ENCODE measurements at regions of chr15 and their contacts with region 1.

Region 1: DNA sequence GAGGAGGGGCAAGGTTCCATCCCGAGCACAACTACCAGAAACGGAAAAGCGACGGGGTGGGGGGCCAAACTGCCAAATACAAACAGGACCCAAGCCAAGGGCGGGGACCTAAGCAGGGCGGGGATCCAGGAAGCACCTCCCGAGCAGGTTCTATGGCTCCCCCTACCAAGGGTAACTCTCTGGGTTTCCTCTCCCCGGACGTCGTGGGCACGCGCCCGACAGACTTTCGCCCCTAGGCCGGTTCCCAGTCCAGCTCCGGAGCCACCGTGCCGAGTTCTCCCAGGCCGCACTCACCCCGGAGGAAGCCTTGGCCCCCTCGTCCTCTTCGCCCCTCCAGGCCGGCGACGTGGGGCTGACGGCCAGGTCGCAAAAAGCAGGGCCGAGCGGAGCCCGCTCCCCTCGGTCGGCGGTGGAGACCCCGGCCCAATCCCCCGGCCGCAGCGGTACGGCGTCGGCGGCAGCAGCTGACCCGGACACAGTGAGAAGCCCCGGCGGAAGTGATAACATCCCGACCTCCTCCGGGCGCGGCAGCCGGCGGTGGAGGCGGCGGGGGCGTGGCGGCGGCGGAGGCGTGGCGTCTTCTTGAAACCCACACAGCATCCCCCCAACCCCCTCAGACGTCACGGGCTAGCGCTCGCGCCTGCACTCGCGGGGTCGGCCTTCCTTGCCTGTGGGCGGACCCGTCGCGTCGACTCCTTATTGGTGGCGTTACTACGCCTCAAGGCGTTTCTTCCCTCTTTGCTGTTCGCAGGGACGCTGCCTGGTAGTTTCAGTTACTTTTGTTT is at the start of gene BNIP2:
- DNase-seq: peak; percentile 96 to 100 (median 100)
- ATAC-seq: peak; percentile 86
- H3K4me3 ChIP-seq: peak within 1 kb of the TSS; percentile 97
- H3K4me3 Mint-ChIP-seq: peak within 1 kb of the TSS; percentile 95
- H3K27ac ChIP-seq: peak within 1 kb of the TSS; percentile 99 to 100
- H3K27ac Mint-ChIP-seq: peak within 1 kb of the TSS; percentile 99
- H3K4me1 ChIP-seq: peaks cover 33% of the 10 kb centered on the region
- H3K4me1 Mint-ChIP-seq: peaks cover 43% of the 10 kb centered on the region
- H3K27me3 ChIP-seq: no peaks in the 10 kb centered on the region
- H3K27me3 Mint-ChIP-seq: no peaks in the 10 kb centered on the region
- CTCF ChIP-seq: no peak
- total RNA-seq, gene BNIP2: 109 TPM

Region 2: GRCh38 chr15:57706405-57707209 is 1982.4 kb before region 1 on chr15 and contains the start of gene POLR2M:
- CTCF ChIA-PET with region 1: no interaction called
- POLR2A ChIA-PET with region 1: interaction called, 8 read pairs
- intact Hi-C with region 1: loop called in 1 of 2 experiments (anchors 10 kb)
- DNase-seq: peak; percentile 78 to 98 (median 86)
- ATAC-seq: peak; percentile 88
- H3K4me3 ChIP-seq: peak within 1 kb of the TSS; percentile 90
- H3K4me3 Mint-ChIP-seq: peak within 1 kb of the TSS; percentile 85
- H3K27ac ChIP-seq: peak within 1 kb of the TSS; percentile 87 to 95
- H3K27ac Mint-ChIP-seq: peak within 1 kb of the TSS; percentile 99
- H3K4me1 ChIP-seq: peaks cover 35% of the 10 kb centered on the region
- H3K4me1 Mint-ChIP-seq: peaks cover 93% of the 10 kb centered on the region
- H3K27me3 ChIP-seq: no peaks in the 10 kb centered on the region
- H3K27me3 Mint-ChIP-seq: no peaks in the 10 kb centered on the region
- CTCF ChIP-seq: no peak
- total RNA-seq, gene POLR2M: 88.5 to 109 TPM

Region 3: DNA sequence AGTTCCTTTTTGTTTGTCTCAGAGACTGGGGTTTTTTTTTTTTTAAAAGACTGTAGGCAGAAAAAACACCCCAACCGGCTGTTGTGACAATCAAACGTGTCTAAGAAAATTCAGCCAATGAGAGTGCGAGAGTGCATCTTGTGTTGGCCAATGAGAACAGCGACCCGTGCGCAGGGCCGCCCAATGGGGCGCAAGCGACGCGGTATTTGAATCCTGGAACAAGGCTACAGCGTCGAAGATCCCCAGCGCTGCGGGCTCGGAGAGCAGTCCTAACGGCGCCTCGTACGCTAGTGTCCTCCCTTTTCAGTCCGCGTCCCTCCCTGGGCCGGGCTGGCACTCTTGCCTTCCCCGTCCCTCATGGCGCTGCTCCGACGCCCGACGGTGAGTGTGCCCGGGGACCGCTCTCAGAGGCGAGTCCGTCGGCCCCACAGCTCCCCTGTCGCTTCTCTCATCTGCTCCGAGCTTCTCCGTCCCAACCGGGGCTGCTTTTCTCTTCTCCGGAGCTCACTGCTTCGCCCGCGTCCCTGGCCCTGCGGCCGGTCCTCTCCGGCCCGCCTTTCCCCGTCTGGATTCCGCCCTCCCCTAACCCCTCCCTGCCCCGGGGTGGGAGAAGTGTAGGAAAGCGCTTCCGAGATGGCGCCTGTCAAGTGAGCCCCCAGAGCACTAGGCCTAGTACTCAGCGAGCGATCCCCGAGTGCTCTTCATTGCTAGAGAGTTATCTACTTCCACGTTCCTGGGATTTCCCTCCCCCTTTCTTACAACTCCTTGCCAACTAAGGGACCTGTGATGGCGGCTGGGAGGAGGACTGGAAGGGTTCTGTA is 583.9 kb before region 1 on chr15 and contains the start of gene CCNB2:
- CTCF ChIA-PET with region 1: no interaction called
- POLR2A ChIA-PET with region 1: no interaction called
- intact Hi-C with region 1: loop called in 1 of 2 experiments (anchors 10 kb)
- DNase-seq: peak; percentile 68 to 95 (median 79)
- ATAC-seq: peak; percentile 99
- H3K4me3 ChIP-seq: peak within 1 kb of the TSS; percentile 71
- H3K4me3 Mint-ChIP-seq: peak within 1 kb of the TSS; percentile 97
- H3K27ac ChIP-seq: peak within 1 kb of the TSS in 1 of 2 donors; percentile 26
- H3K27ac Mint-ChIP-seq: peak within 1 kb of the TSS; percentile 99
- H3K4me1 ChIP-seq: peaks cover 9% of the 10 kb centered on the region
- H3K4me1 Mint-ChIP-seq: peaks cover 17% of the 10 kb centered on the region
- H3K27me3 ChIP-seq: no peaks in the 10 kb centered on the region
- H3K27me3 Mint-ChIP-seq: no peaks in the 10 kb centered on the region
- CTCF ChIP-seq: no peak
- total RNA-seq, gene CCNB2: 0.85 TPM in 1 of 2 experiments, not detected in the other

Region 4: DNA sequence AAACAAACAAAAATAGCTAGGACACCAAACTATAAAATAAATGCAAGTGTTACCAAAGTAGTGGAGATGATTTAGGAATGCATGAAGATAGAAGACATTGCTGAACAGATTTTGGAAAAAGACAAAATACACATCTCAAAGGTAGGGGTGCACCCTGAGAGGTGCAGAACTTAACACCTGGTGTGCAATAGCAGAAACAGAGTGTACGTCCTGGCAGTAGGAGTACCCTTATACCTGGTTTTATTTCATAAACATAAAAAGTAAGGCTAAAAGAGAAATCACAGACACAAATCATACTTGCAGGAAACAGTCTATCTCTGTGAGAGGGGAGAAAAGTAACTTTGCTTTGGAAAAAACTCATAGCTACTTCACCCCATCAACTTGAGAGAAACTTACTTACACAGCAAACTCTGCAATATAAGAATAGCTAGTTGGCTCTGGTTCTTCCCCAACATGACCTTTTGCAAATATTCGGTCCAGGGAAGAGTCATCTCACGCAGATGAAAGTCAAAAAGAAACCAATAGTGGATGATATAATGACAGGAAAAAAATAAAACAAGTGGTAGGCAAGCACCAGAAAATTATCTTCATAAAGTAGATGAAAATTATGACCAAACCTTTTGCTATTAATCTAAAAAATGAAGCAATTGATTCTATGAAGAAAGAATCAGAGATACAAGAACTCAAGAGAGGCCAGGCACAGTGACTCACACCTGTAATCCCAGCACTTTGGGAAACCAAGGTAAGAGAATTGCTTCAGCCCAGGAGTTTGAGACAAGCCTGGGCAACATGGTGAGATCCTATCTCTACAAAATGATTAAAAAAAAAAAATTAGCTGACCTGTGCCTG is 108.9 kb after region 1 on chr15:
- CTCF ChIA-PET with region 1: no interaction called
- POLR2A ChIA-PET with region 1: interaction called, 9 read pairs
- intact Hi-C with region 1: loop called in 1 of 2 experiments (anchors 1 kb)
- DNase-seq: peak in 1 of 14 experiments; percentile 39
- ATAC-seq: no peak
- H3K4me3 ChIP-seq: peak overlapping the region; percentile 20
- H3K4me3 Mint-ChIP-seq: peak overlapping the region; percentile 69
- H3K27ac ChIP-seq: peak overlapping the region in 1 of 2 donors; percentile 55
- H3K27ac Mint-ChIP-seq: peak overlapping the region; percentile 81
- H3K4me1 ChIP-seq: peaks cover 54% of the 10 kb centered on the region
- H3K4me1 Mint-ChIP-seq: peaks cover 80% of the 10 kb centered on the region
- H3K27me3 ChIP-seq: no peaks in the 10 kb centered on the region
- H3K27me3 Mint-ChIP-seq: no peaks in the 10 kb centered on the region
- CTCF ChIP-seq: no peak

Region 5: DNA sequence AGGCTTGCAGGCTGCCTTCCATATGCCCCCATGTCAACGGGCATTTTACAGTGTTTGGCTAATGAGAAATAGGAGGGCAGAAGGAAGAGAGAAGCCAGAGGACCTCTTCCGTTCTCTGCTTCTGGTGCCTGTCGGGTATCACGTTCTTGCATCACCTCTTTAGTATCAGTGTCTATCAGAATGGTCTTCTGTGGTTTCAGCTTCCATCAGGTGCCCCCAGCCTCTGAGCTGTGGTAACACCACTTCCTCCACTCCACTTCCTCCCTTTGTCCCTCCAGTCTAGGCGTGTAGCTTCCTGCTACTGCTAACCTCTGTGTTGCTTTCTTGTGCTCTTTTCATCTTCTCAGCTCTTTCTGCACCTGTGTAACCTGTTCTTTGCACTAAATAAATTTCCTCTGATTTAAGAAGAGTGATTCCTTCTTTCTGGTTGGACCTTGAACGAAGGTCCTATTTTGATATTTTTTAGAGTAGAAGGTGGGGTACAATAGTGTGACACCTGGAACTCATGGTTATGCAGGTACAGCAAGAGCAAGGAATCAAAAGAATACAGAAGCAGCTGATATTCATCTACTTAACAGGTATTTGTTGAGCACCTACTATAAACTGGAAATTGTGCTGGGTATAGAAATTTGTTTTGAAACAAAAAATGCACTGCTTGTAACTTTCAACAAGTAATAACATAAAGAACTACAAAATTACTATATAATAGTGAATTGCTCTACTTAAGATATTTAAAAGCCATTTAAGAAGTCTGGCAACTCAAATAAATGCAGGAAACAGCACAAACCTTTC is 287.6 kb after region 1 on chr15:
- CTCF ChIA-PET with region 1: no interaction called
- POLR2A ChIA-PET with region 1: interaction called, 7 read pairs
- intact Hi-C with region 1: loop called in 1 of 2 experiments (anchors 10 kb)
- DNase-seq: peak in 13 of 14 experiments; percentile 26 to 88 (median 43)
- ATAC-seq: peak; percentile 95
- H3K4me3 ChIP-seq: no peak overlapping the region
- H3K4me3 Mint-ChIP-seq: peak overlapping the region; percentile 47
- H3K27ac ChIP-seq: no peak overlapping the region
- H3K27ac Mint-ChIP-seq: peak overlapping the region; percentile 7
- H3K4me1 ChIP-seq: peaks cover 15% of the 10 kb centered on the region
- H3K4me1 Mint-ChIP-seq: peaks cover 43% of the 10 kb centered on the region
- H3K27me3 ChIP-seq: no peaks in the 10 kb centered on the region
- H3K27me3 Mint-ChIP-seq: no peaks in the 10 kb centered on the region
- CTCF ChIP-seq: no peak

Region 6: DNA sequence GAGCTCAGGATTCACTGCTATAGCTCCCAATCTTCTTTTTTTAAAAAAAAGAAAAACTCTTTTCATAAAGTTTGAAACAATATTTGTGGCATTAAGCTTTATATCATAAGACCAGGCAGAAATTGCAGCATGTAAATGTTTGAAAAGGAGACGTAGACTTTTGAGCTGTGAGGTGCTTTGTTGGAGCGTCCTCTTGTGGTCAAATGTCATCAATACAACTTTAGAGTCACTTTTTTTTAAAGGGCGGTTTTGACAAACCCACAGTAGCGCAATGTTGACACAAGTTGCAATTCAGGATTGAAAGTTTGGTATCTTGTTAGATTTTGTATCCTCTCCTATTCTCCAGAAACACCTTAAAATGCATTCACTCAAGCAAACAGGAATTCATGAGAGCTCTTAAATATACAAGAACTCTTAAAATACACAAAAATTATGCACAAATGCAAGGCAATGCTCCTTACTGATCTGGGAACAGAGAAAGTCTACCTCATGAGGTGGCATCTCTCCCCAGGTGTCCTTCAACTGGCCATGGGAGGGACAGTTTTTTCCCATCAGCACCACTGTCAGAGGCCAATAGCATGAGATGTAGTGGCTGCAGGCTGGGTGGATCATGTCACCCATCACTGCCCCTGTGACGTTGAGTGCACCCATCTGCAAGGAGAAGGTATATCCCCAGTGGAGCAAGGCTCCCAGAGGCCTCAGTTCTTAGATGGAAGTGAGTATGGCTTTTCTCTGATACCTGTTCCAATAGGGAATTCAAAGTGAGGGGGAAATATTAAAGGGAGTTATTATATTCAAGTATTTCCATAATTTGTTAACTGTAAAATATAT is 638.0 kb after region 1 on chr15:
- CTCF ChIA-PET with region 1: interaction called, 5 read pairs
- POLR2A ChIA-PET with region 1: interaction called, 4 read pairs
- intact Hi-C with region 1: loop called (anchors 2 to 10 kb)
- DNase-seq: peak in 9 of 14 experiments; percentile 0 to 78 (median 8)
- ATAC-seq: peak; percentile 49
- H3K4me3 ChIP-seq: no peak overlapping the region
- H3K4me3 Mint-ChIP-seq: no peak overlapping the region
- H3K27ac ChIP-seq: no peak overlapping the region
- H3K27ac Mint-ChIP-seq: no peak overlapping the region
- H3K4me1 ChIP-seq: no peaks in the 10 kb centered on the region
- H3K4me1 Mint-ChIP-seq: peaks cover 6% of the 10 kb centered on the region
- H3K27me3 ChIP-seq: peaks cover 13 to 23% of the 10 kb centered on the region in 2 experiments
- H3K27me3 Mint-ChIP-seq: peaks cover 77% of the 10 kb centered on the region
- CTCF ChIP-seq: peak; percentile 69

Region 7: DNA sequence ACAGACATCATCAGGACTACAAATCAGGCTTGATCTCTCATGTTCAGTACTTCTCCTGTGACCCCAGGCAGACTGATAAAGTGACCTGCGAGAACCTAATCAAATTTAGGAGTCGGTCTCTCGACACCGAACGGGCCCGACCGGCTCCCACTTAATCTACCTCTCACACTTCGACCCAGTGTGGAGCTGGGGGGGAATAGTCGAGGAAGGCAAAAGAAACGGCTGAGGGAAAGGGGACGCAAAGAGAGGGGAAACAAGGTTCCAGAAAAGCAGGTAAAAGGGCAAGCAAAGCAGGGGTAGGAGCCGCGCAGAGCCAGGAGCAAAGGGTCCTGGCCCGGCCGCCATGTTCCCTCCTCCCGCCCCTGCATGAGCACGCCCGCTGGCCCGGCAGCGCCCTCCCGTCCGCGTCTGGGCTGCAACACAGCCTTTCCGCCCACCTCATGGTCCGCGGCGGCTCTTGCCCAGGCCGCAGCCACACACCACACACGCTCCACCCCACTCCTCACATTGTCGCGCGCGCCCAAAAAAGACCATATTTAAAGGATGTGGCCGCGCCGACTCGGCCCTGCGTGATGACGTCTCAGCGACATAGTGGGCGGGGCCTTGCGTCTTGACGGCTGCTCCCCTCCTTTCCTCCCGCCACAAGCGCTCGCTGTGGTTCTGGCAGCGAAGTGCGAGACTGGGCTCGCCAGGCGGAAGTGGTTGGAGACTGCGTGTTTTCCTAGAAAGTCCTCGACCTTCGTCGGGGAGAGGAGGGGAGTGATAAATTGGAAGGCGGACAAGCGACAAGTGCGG is 789.7 kb after region 1 on chr15 and contains the start of gene ICE2:
- CTCF ChIA-PET with region 1: no interaction called
- POLR2A ChIA-PET with region 1: interaction called, 4 read pairs
- intact Hi-C with region 1: loop called (anchors 1 to 5 kb)
- DNase-seq: peak; percentile 89 to 98 (median 94)
- ATAC-seq: peak; percentile 90
- H3K4me3 ChIP-seq: peak within 1 kb of the TSS; percentile 92
- H3K4me3 Mint-ChIP-seq: peak within 1 kb of the TSS; percentile 98
- H3K27ac ChIP-seq: peak within 1 kb of the TSS; percentile 86 to 92
- H3K27ac Mint-ChIP-seq: peak within 1 kb of the TSS; percentile 99
- H3K4me1 ChIP-seq: peaks cover 26% of the 10 kb centered on the region
- H3K4me1 Mint-ChIP-seq: peaks cover 68% of the 10 kb centered on the region
- H3K27me3 ChIP-seq: no peaks in the 10 kb centered on the region
- H3K27me3 Mint-ChIP-seq: no peaks in the 10 kb centered on the region
- CTCF ChIP-seq: no peak
- total RNA-seq, gene ICE2: 20.4 to 23.4 TPM